Naive thymus-derived CD8-positive, alpha-beta T cell (primary cell): ENCODE measurements at regions of chr6 and their contacts with region 1.

Region 1: GRCh38 chr6:107820338-107821261 is 3.5 kb downstream of the SCML4 start:
- DNase-seq: peak in 9 of 10 donors; percentile 36 to 76 (median 45)
- ATAC-seq: peak in 1 of 2 donors; percentile 22
- H3K4me3 Mint-ChIP-seq: peak overlapping the region; percentile 85 to 99 (median 96)
- H3K27ac Mint-ChIP-seq: peak overlapping the region; percentile 97 to 100 (median 99)
- H3K4me1 Mint-ChIP-seq: peaks cover 37 to 91% (median 79%) of the 10 kb centered on the region in 4 donors
- H3K27me3 Mint-ChIP-seq: no peaks in the 10 kb centered on the region

Region 2: GRCh38 chr6:107740496-107741190 is 80.0 kb before region 1 on chr6:
- POLR2A ChIA-PET with region 1: interaction called, 68 read pairs
- DNase-seq: peak in 3 of 10 donors; percentile 14 to 50 (median 46)
- ATAC-seq: peak; percentile 5 to 20
- H3K4me3 Mint-ChIP-seq: peak overlapping the region; percentile 63 to 88 (median 82)
- H3K27ac Mint-ChIP-seq: peak overlapping the region; percentile 87 to 97 (median 94)
- H3K4me1 Mint-ChIP-seq: peaks cover 52 to 91% (median 78%) of the 10 kb centered on the region in 4 donors
- H3K27me3 Mint-ChIP-seq: no peaks in the 10 kb centered on the region

Region 3: GRCh38 chr6:107786709-107787588 is 33.7 kb before region 1 on chr6:
- POLR2A ChIA-PET with region 1: interaction called, 104 read pairs
- DNase-seq: peak in 8 of 10 donors; percentile 20 to 71 (median 48)
- ATAC-seq: peak; percentile 71 to 82
- H3K4me3 Mint-ChIP-seq: peak overlapping the region; percentile 68 to 87 (median 82)
- H3K27ac Mint-ChIP-seq: peak overlapping the region; percentile 68 to 98 (median 95)
- H3K4me1 Mint-ChIP-seq: peaks cover 57 to 91% (median 87%) of the 10 kb centered on the region in 4 donors
- H3K27me3 Mint-ChIP-seq: no peaks in the 10 kb centered on the region

Region 4: DNA sequence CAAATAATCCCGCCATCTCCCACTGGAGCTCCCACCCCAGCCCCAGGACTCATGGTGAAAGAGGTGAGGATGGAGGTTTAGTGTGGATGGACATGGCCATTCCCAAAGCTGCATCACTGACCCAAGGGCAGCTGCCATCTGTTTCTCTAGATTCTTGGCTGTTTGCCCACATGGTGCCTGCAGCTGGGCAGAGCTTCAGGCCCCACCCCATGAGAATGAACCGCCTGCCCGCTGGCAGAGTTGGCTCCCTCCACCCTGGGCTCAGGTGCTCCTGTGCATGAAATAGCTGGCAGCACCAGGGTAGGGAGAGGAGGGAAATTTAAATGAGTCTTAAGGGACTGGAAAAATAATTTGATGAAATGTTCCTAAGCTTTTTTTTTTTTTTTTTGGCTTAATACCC is 13.9 kb before region 1 on chr6:
- POLR2A ChIA-PET with region 1: interaction called, 35 read pairs
- DNase-seq: no peak
- ATAC-seq: no peak
- H3K4me3 Mint-ChIP-seq: no peak overlapping the region
- H3K27ac Mint-ChIP-seq: peak overlapping the region in 6 of 10 donors; percentile 18 to 91 (median 78)
- H3K4me1 Mint-ChIP-seq: peaks cover 38 to 84% (median 80%) of the 10 kb centered on the region in 4 donors
- H3K27me3 Mint-ChIP-seq: no peaks in the 10 kb centered on the region